ENCODE measurements at regions of chr15 and their contacts with region 1.

Region 1: GRCh38 chr15:88897456-88898194 is 2.3 kb upstream of the HAPLN3 start:
- DNase-seq: peak; percentile 68 to 93 (median 83)
- ATAC-seq: peak; percentile 88
- H3K4me3 ChIP-seq: peak overlapping the region; percentile 20
- H3K4me3 Mint-ChIP-seq: peak overlapping the region; percentile 76
- H3K27ac ChIP-seq: no peak overlapping the region
- H3K27ac Mint-ChIP-seq: peak overlapping the region; percentile 60
- H3K4me1 ChIP-seq: peaks cover 56% of the 10 kb centered on the region
- H3K4me1 Mint-ChIP-seq: peaks cover 49% of the 10 kb centered on the region
- H3K27me3 ChIP-seq: no peaks in the 10 kb centered on the region
- H3K27me3 Mint-ChIP-seq: no peaks in the 10 kb centered on the region
- CTCF ChIP-seq: peak; percentile 63

Region 2: GRCh38 chr15:88476635-88477060 is 421.0 kb before region 1 on chr15:
- CTCF ChIA-PET with region 1: no interaction called
- POLR2A ChIA-PET with region 1: no interaction called
- intact Hi-C with region 1: loop called in 1 of 2 experiments (anchors 10 kb)
- DNase-seq: peak in 5 of 14 experiments; percentile 4 to 53 (median 43)
- ATAC-seq: peak; percentile 52
- H3K4me3 ChIP-seq: no peak overlapping the region
- H3K4me3 Mint-ChIP-seq: no peak overlapping the region
- H3K27ac ChIP-seq: no peak overlapping the region
- H3K27ac Mint-ChIP-seq: no peak overlapping the region
- H3K4me1 ChIP-seq: no peaks in the 10 kb centered on the region
- H3K4me1 Mint-ChIP-seq: peaks cover 6% of the 10 kb centered on the region
- H3K27me3 ChIP-seq: no peaks in the 10 kb centered on the region
- H3K27me3 Mint-ChIP-seq: no peaks in the 10 kb centered on the region
- CTCF ChIP-seq: peak; percentile 47

Region 3: GRCh38 chr15:89017370-89018066 is 119.9 kb after region 1 on chr15:
- CTCF ChIA-PET with region 1: interaction called, 58 read pairs
- POLR2A ChIA-PET with region 1: interaction called, 3 read pairs
- intact Hi-C with region 1: loop called (anchors 1 kb)
- DNase-seq: peak; percentile 80 to 95 (median 85)
- ATAC-seq: peak; percentile 95
- H3K4me3 ChIP-seq: peak overlapping the region; percentile 36
- H3K4me3 Mint-ChIP-seq: peak overlapping the region; percentile 20
- H3K27ac ChIP-seq: no peak overlapping the region
- H3K27ac Mint-ChIP-seq: peak overlapping the region; percentile 22
- H3K4me1 ChIP-seq: peaks cover 17% of the 10 kb centered on the region
- H3K4me1 Mint-ChIP-seq: peaks cover 13% of the 10 kb centered on the region
- H3K27me3 ChIP-seq: peaks cover 0 to 2% of the 10 kb centered on the region in 2 experiments
- H3K27me3 Mint-ChIP-seq: peaks cover 14% of the 10 kb centered on the region
- CTCF ChIP-seq: peak; percentile 85

Region 4: DNA sequence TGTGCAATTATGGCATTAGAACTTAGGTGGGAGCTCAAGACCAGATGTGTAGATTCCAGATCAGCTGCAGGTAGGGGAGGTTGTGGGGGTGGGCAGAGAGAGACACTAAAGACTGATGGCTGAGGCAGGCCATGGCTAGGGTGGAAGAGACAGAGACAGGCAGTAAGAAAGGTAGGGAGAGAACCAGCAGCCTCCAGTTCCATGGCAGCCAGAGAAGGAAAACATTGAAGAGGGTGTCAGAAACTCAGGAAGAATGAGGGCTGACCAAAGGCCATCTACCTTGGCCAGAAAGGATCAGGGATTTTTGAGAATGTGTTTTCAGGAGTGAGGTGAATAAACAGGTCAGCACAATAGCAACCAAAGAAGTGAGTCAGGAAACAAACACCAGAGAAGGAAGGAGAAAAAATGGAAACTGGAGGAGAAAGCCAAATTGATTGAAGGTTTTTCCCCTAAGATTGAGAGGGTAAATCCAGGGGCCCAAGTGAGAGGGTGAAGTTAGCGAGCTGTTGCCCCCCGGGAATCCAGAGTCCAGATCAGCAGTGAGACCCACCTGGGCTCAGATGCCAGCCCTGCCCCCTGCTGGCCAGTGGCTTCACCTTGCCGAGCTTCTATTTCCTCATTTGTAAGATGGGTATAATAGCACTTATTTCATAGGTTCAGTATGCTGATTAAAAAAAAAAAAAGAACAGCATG is 231.6 kb after region 1 on chr15:
- CTCF ChIA-PET with region 1: no interaction called
- POLR2A ChIA-PET with region 1: no interaction called
- intact Hi-C with region 1: loop called (anchors 1 to 2 kb)
- DNase-seq: peak; percentile 36 to 78 (median 55)
- ATAC-seq: peak; percentile 66
- H3K4me3 ChIP-seq: no peak overlapping the region
- H3K4me3 Mint-ChIP-seq: no peak overlapping the region
- H3K27ac ChIP-seq: no peak overlapping the region
- H3K27ac Mint-ChIP-seq: no peak overlapping the region
- H3K4me1 ChIP-seq: peaks cover 14% of the 10 kb centered on the region
- H3K4me1 Mint-ChIP-seq: peaks cover 16% of the 10 kb centered on the region
- H3K27me3 ChIP-seq: no peaks in the 10 kb centered on the region
- H3K27me3 Mint-ChIP-seq: no peaks in the 10 kb centered on the region
- CTCF ChIP-seq: peak; percentile 82

Region 5: GRCh38 chr15:89177633-89178306 is 280.1 kb after region 1 on chr15:
- CTCF ChIA-PET with region 1: interaction called, 4 read pairs
- POLR2A ChIA-PET with region 1: no interaction called
- intact Hi-C with region 1: loop called (anchors 1 to 2 kb)
- DNase-seq: peak; percentile 32 to 82 (median 52)
- ATAC-seq: peak; percentile 75
- H3K4me3 ChIP-seq: no peak overlapping the region
- H3K4me3 Mint-ChIP-seq: no peak overlapping the region
- H3K27ac ChIP-seq: no peak overlapping the region
- H3K27ac Mint-ChIP-seq: no peak overlapping the region
- H3K4me1 ChIP-seq: peaks cover 4% of the 10 kb centered on the region
- H3K4me1 Mint-ChIP-seq: peaks cover 8% of the 10 kb centered on the region
- H3K27me3 ChIP-seq: no peaks in the 10 kb centered on the region
- H3K27me3 Mint-ChIP-seq: no peaks in the 10 kb centered on the region
- CTCF ChIP-seq: peak; percentile 77

Region 6: DNA sequence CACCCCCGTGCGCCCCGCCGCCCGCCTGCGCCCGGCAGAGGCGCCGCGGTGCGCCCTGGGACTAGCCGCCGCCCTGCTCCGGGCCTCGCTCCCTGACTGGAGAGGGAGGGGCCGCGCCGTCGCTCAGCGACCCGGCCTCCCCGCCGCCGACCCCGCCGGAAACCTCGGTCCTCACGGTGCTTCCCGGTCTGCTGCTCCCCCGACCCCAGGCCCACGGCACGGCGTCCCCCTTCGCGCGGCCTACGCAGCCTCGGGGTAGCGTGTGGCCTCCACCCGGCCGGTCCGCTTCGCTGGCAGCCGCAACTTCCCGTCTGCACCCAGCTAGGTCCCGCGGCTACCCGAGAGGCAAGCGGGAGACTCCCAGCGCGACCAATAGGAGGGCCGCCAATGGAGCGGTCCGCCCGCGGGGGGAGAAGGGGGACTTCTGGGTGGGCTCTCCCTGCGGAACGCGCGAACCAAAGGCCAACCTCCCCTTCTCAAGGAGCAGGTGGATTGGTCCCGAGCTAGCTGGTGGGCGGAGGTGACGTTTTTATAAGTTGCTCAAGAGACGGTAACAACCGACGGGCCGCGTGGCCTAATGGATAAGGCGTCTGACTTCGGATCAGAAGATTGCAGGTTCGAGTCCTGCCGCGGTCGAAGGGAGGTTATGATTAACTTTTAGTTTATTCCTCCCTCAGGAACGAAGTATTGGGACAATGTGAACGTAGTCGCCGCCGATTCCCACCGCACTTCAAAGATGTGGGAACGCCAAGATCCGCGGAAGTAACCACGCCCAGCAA is 437.1 kb after region 1 on chr15 and contains the start of gene POLG:
- CTCF ChIA-PET with region 1: no interaction called
- POLR2A ChIA-PET with region 1: no interaction called
- intact Hi-C with region 1: loop called in 1 of 2 experiments (anchors 5 kb)
- DNase-seq: peak; percentile 98 to 100 (median 99)
- ATAC-seq: peak; percentile 91
- H3K4me3 ChIP-seq: peak within 1 kb of the TSS; percentile 92
- H3K4me3 Mint-ChIP-seq: peak within 1 kb of the TSS; percentile 96
- H3K27ac ChIP-seq: peak within 1 kb of the TSS; percentile 55 to 79
- H3K27ac Mint-ChIP-seq: peak within 1 kb of the TSS; percentile 100
- H3K4me1 ChIP-seq: peaks cover 54% of the 10 kb centered on the region
- H3K4me1 Mint-ChIP-seq: peaks cover 56% of the 10 kb centered on the region
- H3K27me3 ChIP-seq: no peaks in the 10 kb centered on the region
- H3K27me3 Mint-ChIP-seq: peaks cover 11% of the 10 kb centered on the region
- CTCF ChIP-seq: no peak
- total RNA-seq, gene POLG: 139 to 140 TPM